Psoas muscle (tissue), 8 donors: ENCODE measurements at regions of chr22 and their contacts with region 1.

Region 1: GRCh38 chr22:25110846-25111578 is 88.6 kb upstream of the CRYBB3 start:
- DNase-seq: peak; percentile 55 to 70
- ATAC-seq: peak; percentile 70 to 75 (median 72)
- H3K4me3 ChIP-seq: peak overlapping the region; percentile 77
- H3K27ac ChIP-seq: peak overlapping the region; percentile 86
- H3K4me1 ChIP-seq: peaks cover 12% of the 10 kb centered on the region
- H3K27me3 ChIP-seq: no peaks in the 10 kb centered on the region
- CTCF ChIP-seq: peak; percentile 54

Region 2: GRCh38 chr22:25161916-25162530 is 51.0 kb after region 1 on chr22:
- intact Hi-C with region 1: loop called in 1 of 2 experiments (anchors 2 kb)
- DNase-seq: peak; percentile 29 to 69
- ATAC-seq: peak; percentile 80 to 87 (median 86)
- H3K4me3 ChIP-seq: no peak overlapping the region
- H3K27ac ChIP-seq: peak overlapping the region; percentile 64
- H3K4me1 ChIP-seq: peaks cover 32% of the 10 kb centered on the region
- H3K27me3 ChIP-seq: no peaks in the 10 kb centered on the region
- CTCF ChIP-seq: no peak

Region 3: GRCh38 chr22:25172153-25172552 is 61.1 kb after region 1 on chr22:
- intact Hi-C with region 1: loop called in 1 of 2 experiments (anchors 1 kb)
- DNase-seq: peak in 1 of 2 donors; percentile 46
- ATAC-seq: peak in 3 of 4 donors; percentile 82 to 90 (median 83)
- H3K4me3 ChIP-seq: no peak overlapping the region
- H3K27ac ChIP-seq: no peak overlapping the region
- H3K4me1 ChIP-seq: no peaks in the 10 kb centered on the region
- H3K27me3 ChIP-seq: no peaks in the 10 kb centered on the region
- CTCF ChIP-seq: peak; percentile 64

Region 4: GRCh38 chr22:25395915-25396314 is 284.9 kb after region 1 on chr22:
- intact Hi-C with region 1: no loop called
- DNase-seq: peak in 1 of 2 donors; percentile 29
- ATAC-seq: no peak
- H3K4me3 ChIP-seq: no peak overlapping the region
- H3K27ac ChIP-seq: no peak overlapping the region
- H3K4me1 ChIP-seq: peaks cover 9% of the 10 kb centered on the region
- H3K27me3 ChIP-seq: no peaks in the 10 kb centered on the region
- CTCF ChIP-seq: no peak